Thyroid gland (tissue), 4 donors: ENCODE measurements at regions of chr17 and their contacts with region 1.

Region 1: DNA sequence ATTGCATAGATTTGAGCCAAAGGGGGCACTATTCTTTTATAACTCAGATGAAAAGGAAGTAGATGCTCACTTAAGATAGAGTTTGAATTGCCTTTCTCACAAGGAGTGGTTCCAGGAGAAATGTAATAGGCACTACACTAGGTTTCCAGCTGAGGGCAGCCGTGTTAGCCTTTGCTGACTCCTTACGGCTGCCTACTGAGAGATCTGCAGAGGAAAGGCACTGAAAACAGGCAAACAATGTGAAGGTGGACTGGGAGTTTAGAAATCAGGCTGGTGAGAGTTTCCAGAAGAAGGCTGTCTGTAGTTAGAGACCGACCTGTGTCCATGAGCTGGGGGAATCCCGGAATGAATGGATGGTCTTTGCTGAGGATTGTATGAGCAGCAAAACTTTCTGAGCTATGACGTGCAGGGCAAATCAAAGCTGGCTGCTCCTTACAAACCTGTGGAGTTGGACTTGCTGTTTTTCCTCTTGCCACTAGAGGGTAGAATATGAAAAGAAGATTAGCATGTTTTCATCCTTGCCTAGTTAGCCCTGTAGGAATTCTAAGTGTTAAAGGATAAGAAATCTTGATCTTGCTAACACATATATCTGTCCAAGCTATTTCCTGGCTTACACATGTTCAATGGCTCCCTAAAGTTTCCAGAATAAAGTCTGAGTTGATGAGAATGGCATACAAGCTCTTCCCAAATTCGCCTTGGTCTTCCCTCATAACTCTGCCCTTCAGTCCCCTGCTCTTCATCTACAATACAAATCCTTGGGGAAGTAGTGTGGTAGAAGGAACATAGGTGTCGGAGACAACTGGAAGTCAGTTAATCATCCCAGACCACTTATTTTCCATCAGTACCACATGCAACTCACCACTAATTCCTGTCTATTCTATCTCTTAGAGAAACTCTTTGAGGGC is 20.1 kb upstream of the TAOK1 start:
- DNase-seq: peak; percentile 66 to 68
- H3K4me3 ChIP-seq: no peak overlapping the region
- H3K27ac ChIP-seq: no peak overlapping the region
- H3K4me1 ChIP-seq: no peaks in the 10 kb centered on the region
- H3K27me3 ChIP-seq: no peaks in the 10 kb centered on the region
- CTCF ChIP-seq: peak; percentile 42 to 92 (median 74)
- POLR2A ChIP-seq: no peak

Region 2: DNA sequence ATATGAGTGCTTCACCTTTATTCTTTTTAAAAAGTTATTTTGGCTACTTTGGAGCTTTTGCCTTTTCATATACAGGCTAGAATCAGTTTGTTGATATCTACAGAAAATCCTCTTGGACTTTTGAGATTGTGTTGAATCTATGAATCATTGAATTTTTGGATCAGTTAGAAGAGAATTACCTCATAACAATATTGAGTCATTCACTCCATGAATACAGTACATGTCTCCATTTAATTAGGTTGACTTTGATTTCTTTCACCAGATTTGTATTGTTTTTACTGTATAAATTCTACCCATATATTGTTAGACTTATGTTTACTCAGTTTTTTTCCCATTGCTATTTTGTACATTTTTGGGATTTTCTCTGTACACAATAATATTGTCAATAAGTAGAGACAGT is 74.5 kb after region 1 on chr17:
- intact Hi-C with region 1: no loop called
- DNase-seq: no peak
- H3K4me3 ChIP-seq: no peak overlapping the region
- H3K27ac ChIP-seq: no peak overlapping the region
- H3K4me1 ChIP-seq: peaks cover 7 to 16% of the 10 kb centered on the region in 2 donors
- H3K27me3 ChIP-seq: no peaks in the 10 kb centered on the region
- CTCF ChIP-seq: no peak
- POLR2A ChIP-seq: no peak

Region 3: DNA sequence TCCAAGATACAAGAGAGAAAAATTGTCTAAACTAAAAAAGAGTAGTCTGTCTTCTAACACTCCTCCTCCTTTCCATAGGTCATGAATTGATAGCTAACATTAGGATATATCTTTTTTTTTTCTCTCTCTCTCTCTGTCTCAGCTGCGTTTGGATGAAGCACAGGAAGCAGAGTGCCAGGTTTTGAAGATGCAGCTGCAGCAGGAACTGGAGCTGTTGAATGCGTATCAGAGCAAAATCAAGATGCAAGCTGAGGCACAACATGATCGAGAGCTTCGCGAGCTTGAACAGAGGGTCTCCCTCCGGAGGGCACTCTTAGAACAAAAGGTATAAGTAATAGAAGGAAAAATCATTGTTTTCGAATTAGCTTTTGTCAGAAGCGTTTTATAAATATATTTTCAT is 163.9 kb after region 1 on chr17:
- intact Hi-C with region 1: loop called (anchors 5 kb)
- DNase-seq: no peak
- H3K4me3 ChIP-seq: no peak overlapping the region
- H3K27ac ChIP-seq: no peak overlapping the region
- H3K4me1 ChIP-seq: no peaks in the 10 kb centered on the region
- H3K27me3 ChIP-seq: no peaks in the 10 kb centered on the region
- CTCF ChIP-seq: no peak
- POLR2A ChIP-seq: no peak